ENCODE measurements at regions of chr2 and their contacts with region 1.

Region 1: DNA sequence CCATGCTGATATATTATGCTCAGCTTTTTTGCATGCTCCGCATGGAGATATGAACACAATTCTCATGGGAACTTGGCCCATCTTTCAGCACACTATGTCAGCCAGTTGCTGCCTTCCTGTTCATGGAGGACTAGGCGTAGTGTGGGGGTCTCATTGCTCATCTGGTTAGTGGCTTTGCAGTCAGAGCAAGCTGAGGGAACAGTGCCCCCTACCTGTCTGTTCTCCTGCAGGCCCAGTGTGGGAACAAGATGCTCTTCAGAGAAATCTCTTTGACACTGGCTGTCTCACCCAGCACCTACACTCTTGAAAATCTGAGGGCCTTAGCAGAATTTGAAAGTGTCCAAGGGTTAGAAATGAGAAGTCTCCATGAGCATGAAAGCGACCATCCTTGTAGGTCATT is 47.1 kb downstream of the SPTBN1 start:
- H3K4me3 ChIP-seq: no peak overlapping the region
- H3K27ac ChIP-seq: no peak overlapping the region
- H3K4me1 ChIP-seq: no peaks in the 10 kb centered on the region
- CTCF ChIP-seq: 0 out of 2 replicates have a peak, but pooled peaks have one; percentile 18

Region 2: DNA sequence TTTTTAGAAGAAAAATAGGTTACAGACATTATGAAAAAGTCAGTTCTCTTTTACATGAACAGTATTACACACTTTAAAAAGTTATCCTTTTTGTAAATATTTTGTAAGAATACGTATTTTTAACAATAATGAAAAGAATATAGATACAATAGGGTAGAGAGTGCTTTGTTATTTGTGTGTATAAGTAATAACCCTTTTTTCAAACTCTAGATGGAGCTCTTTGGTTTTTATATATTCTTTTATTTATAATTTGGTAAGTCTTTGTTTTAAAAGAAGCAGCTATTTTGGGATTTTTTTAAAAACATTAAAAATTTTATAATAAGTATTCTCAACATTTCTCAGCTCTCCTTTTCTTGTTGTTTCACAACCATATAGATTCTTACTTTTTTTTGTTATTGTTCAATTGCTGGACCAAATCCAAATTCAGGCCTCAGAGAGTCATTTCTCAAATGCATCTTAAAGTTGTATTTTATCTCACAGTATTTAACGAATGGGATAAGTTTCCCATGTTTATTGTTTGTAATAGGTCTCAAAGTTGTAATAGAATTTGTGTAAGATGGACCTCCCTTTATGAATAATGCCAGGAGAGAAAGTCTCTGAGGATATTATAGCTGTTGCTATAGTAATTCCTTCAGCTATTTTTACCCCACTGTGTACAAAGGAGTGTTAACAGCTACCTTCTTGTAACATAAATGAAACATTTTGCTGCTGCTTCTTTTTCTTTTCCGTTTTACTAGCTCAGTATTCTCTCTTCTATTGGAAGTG is 341.4 kb before region 1 on chr2:
- CTCF ChIA-PET with region 1: interaction called, 11 read pairs
- POLR2A ChIA-PET with region 1: no interaction called
- H3K4me3 ChIP-seq: no peak overlapping the region
- H3K27ac ChIP-seq: no peak overlapping the region
- H3K4me1 ChIP-seq: no peaks in the 10 kb centered on the region
- CTCF ChIP-seq: no peak

Region 3: DNA sequence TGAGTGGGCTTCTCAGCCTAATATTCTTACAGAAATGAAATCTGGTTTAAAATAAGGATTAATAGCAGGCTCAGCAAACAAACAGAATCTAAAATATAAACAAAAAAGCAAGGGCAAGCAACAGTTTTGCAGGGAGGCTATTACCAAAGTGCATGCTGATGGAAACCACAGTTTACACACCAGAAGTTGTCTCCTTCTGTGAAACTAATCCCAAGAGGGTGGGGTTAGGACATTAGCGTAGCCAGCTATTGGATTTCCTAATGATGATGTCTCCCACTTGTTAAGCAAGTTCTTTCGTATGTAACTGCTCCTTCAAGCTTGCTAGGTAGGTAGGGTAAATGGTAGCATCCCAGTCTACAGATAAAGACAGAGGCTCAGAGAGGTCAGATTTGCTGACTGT is 182.1 kb before region 1 on chr2:
- CTCF ChIA-PET with region 1: no interaction called
- POLR2A ChIA-PET with region 1: no interaction called
- H3K4me3 ChIP-seq: no peak overlapping the region
- H3K27ac ChIP-seq: no peak overlapping the region
- H3K4me1 ChIP-seq: no peaks in the 10 kb centered on the region
- CTCF ChIP-seq: no peak

Region 4: DNA sequence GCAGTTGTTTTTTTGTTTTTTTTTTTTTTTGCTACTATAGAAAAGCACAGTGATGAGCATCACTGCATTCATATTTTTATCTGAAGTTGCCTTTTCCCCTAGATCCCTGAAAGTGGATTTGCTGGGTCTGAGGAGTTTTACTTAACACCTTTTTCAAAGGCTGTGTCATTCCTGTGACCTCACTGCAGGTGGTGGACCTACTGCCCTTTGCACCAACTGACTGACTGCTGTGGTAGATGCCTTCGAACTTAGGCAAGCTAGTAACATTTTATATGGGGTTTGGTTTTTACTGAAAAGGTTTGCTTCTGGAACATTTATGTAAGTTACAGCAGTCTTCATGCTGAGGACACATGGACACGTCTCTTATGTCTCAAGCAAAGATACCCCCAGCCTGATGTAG is 10.9 kb before region 1 on chr2:
- CTCF ChIA-PET with region 1: interaction called, 12 read pairs
- POLR2A ChIA-PET with region 1: interaction called, 3 read pairs
- H3K4me3 ChIP-seq: no peak overlapping the region
- H3K27ac ChIP-seq: no peak overlapping the region
- H3K4me1 ChIP-seq: peaks cover 9% of the 10 kb centered on the region
- CTCF ChIP-seq: no peak

Measured in HEK293 (cell line).